Activated CD4-positive, alpha-beta memory T cell treated with anti-CD3 and anti-CD28 coated beads, Interleukin-2, amount 10 ng/mL, durations not matched to agents 7 days and 5 days (primary cell): ENCODE measurements at regions of chr20 and their contacts with region 1.

Region 1: DNA sequence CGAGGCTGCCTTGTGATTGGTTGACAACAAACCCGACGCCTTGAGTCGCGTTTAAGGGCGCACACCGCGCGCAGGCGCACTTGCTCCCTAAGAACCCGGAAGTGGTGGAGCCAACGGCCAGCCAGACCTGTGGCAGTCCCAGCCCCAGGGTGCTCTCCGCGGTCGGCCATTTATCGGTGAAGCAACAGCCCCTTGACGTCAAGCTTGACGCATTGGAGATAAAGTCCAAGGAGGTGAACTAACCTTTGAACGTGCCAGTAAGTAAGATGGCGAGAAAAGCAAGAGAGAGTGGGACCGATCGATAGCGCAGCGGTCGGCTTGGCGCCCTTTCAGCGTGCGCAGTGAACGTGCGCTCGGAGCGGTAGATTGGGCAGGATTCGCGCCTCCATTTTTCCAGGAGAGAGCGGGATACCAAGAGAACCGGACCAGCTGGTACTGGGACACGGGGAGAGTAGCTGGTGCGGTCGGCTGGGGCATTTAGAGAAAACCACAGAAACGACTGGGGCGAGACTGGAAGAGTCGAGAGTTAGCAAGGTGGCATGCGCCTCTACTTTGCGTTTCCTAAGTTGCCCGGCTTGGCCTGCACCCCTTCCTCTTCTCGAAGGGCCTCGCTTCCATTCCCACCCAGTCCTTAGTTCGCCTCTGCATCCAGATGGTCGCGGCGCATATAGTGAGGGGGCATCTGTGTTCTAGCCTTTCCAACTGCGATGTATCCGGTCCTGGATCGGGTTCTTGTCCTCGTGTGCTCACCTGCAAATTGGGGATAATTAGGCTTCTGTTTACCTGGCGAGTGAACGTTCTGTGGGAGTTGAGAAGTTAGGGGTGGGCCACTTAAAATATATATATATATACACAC is at the start of gene CSTF1:
- DNase-seq: peak; percentile 99
- H3K4me3 Mint-ChIP-seq: no peak within 1 kb of the TSS
- H3K27ac Mint-ChIP-seq: no peak within 1 kb of the TSS
- H3K4me1 Mint-ChIP-seq: peaks cover 66% of the 10 kb centered on the region
- H3K27me3 Mint-ChIP-seq: no peaks in the 10 kb centered on the region
- total RNA-seq, gene CSTF1: 61.5 to 64.9 TPM

Region 2: DNA sequence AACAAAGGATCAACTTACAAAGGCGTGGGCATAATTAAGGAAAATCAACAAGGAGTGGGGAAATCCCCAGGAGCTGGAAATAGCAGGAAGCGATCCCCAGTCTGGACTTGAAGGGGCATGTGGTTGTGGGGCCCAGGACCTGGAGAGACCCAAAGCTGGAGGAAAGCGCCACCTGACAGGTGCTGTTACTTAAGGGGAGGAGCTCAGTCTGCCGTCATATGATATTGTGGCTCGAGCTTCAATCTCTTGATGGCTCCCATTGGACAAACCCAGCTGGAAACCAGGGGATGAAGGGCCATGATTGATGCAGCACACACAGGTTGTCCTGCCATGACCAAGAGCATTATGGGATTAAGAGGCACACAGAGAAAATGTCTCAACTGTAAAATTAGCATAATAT is 85.6 kb before region 1 on chr20:
- CTCF ChIA-PET with region 1: no interaction called
- POLR2A ChIA-PET with region 1: no interaction called
- DNase-seq: no peak
- H3K4me3 Mint-ChIP-seq: no peak overlapping the region
- H3K27ac Mint-ChIP-seq: no peak overlapping the region
- H3K4me1 Mint-ChIP-seq: no peaks in the 10 kb centered on the region
- H3K27me3 Mint-ChIP-seq: no peaks in the 10 kb centered on the region

Region 3: GRCh38 chr20:56358596-56359211 is 33.8 kb before region 1 on chr20 and contains the start of gene FAM210B:
- CTCF ChIA-PET with region 1: no interaction called
- POLR2A ChIA-PET with region 1: interaction called, 19 read pairs
- DNase-seq: peak; percentile 85
- H3K4me3 Mint-ChIP-seq: peak within 1 kb of the TSS; percentile 77
- H3K27ac Mint-ChIP-seq: no peak within 1 kb of the TSS
- H3K4me1 Mint-ChIP-seq: peaks cover 13% of the 10 kb centered on the region
- H3K27me3 Mint-ChIP-seq: peaks cover 5% of the 10 kb centered on the region
- total RNA-seq, gene FAM210B: 3.7 to 4.3 TPM

Region 4: DNA sequence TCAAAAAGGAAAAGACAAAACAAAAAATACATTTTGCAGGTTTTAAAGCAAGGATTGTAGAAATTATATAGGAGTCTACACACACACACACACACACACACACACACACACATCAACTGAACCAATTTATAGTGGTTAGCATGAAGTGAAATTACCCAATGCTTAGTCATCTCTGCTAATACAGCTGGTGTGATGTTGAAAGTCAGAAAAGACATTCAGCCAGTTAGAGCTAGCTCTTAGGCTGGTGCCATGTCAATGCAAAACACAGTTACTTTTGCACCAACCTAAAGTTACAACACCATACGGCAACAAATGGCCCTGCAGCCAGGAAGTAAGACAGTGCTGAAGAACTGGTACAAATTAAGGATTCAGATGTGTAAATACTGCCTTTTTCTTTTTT is 18.6 kb before region 1 on chr20:
- CTCF ChIA-PET with region 1: interaction called, 3 read pairs
- POLR2A ChIA-PET with region 1: interaction called, 15 read pairs
- DNase-seq: no peak
- H3K4me3 Mint-ChIP-seq: no peak overlapping the region
- H3K27ac Mint-ChIP-seq: peak overlapping the region; percentile 61
- H3K4me1 Mint-ChIP-seq: peaks cover 44% of the 10 kb centered on the region
- H3K27me3 Mint-ChIP-seq: no peaks in the 10 kb centered on the region

Region 5: DNA sequence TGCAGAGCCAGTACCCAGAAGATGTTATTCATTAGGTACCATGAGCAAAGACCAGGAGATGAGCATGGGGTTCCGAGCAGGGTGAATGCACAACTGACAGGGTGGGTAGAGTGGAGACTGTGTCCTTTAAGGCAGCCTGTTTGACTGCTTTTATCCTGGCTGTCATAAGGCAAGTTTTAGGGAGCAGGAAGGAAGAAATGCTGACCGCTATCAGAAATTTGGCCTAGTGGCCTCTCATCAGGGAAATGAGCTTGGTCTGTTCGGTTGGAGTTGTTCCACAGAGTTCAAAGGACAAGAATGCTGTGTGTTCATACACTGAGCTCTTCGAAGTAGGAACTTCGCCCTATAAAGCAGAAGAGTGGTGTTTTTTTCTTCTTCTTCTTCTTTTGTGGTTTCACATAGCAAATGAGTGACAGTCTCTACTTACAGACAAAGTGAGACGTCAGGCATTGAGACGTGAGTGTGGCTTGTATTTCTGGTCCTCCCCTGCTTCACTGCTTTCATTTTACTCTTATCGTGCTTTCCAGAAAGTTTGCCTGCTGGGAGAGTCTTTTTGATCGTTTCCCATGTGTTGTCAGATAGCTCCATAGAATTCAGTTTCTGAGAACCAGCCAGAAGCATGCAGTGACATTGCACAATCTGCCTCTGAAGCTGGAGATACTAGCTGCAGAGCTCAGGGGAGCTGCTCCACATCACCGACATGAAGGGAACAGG is 19.4 kb after region 1 on chr20 and contains the start of gene CASS4:
- CTCF ChIA-PET with region 1: interaction called, 8 read pairs
- POLR2A ChIA-PET with region 1: interaction called, 58 read pairs
- DNase-seq: peak; percentile 54
- H3K4me3 Mint-ChIP-seq: peak within 1 kb of the TSS; percentile 79
- H3K27ac Mint-ChIP-seq: peak within 1 kb of the TSS; percentile 90
- H3K4me1 Mint-ChIP-seq: peaks cover 60% of the 10 kb centered on the region
- H3K27me3 Mint-ChIP-seq: no peaks in the 10 kb centered on the region
- total RNA-seq, gene CASS4: 13.2 TPM

Region 6: DNA sequence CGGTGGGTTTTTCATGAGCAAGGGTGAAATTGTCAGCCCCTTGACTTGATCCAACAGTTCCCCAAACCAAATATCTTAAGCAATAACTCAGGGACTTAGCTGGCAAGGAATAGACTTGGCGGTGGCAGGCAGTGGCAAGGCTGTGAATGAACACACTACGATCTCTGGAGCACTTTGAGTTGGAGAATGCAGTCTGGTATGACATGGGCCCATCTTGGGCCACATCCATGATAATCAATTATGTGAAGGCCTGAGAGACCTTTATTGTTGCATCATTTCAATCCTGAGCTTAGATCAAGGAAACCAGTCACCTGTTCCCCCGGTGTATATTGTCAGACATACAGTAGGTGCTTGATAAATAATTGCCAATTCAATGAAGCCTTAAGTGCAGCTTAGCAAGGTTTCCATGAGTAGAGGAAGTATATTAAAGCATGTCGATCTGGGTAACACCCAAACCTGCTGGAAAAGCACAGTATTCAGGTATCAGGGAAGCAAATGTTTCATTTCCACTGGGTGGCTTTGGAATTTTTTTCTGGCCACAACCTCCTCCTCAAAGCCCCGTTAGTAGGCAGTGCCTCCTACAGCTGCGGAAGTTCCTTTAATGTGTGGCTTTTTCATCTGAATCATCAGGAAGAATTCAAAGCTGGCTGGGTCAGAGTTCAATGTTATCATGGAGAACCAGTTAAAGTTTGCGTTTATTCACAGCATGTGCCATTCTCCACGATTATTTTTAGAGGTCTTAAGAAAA is 29.7 kb after region 1 on chr20:
- CTCF ChIA-PET with region 1: no interaction called
- POLR2A ChIA-PET with region 1: interaction called, 50 read pairs
- DNase-seq: no peak
- H3K4me3 Mint-ChIP-seq: peak overlapping the region; percentile 8
- H3K27ac Mint-ChIP-seq: peak overlapping the region; percentile 52
- H3K4me1 Mint-ChIP-seq: peaks cover 68% of the 10 kb centered on the region
- H3K27me3 Mint-ChIP-seq: no peaks in the 10 kb centered on the region

Region 7: DNA sequence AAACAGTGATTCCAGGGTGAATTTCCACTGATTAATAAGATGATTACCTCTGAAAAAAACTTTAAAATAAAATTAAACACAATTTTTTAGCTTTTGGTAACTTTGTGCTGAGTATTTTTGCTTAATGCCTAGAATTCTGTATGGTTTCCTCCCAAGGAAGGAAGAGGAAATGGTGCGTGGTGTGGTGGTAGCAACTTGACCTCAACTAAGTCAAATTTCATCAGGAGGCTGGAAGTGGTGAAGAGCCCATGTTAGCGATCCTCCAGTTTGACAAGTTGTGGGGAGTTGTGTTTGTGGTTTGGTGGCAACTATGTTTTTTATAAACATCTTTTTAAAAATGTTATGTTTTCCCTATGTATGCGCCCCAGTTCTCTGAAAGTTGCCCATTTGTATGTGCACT is 70.9 kb after region 1 on chr20:
- CTCF ChIA-PET with region 1: interaction called, 12 read pairs
- POLR2A ChIA-PET with region 1: interaction called, 41 read pairs
- DNase-seq: peak; percentile 74
- H3K4me3 Mint-ChIP-seq: peak overlapping the region; percentile 32
- H3K27ac Mint-ChIP-seq: peak overlapping the region; percentile 80
- H3K4me1 Mint-ChIP-seq: peaks cover 76% of the 10 kb centered on the region
- H3K27me3 Mint-ChIP-seq: no peaks in the 10 kb centered on the region

Region 8: DNA sequence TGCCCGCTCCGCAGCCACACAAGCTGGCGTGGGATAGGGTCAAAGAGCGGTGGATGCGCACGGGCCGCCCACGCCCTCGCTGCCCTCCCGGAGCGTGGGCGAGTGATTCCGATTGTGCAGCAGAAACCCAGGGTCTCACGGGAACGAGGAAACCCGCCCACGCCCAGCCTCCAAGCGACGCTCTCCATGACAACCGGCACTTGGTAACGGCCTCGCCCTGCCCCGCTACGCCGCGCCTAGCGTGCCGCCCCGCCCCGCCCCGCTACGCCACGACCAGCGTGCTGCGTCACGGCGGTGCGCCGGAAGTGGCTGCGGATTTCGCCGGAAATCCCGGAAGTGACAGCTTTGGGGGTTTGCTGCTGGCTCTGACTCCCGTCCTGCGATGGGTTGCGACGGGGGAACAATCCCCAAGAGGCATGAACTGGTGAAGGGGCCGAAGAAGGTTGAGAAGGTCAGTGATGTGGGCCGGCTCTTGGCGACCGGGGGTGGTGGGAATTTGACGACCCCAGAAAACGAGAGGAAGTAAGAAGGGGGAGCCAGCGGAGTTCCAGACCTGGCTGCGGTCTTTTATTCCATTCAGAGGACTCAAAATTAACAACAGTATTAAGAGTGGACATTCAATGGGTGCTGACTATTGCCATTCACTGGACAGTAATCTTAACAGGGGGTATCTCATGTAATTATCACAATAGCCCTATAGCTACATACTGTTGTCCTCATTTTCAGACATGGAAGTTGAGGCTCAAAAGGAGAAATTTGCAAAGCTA is 76.0 kb after region 1 on chr20 and contains the start of gene RTF2:
- CTCF ChIA-PET with region 1: interaction called, 12 read pairs
- POLR2A ChIA-PET with region 1: interaction called, 41 read pairs
- DNase-seq: peak; percentile 98
- H3K4me3 Mint-ChIP-seq: peak within 1 kb of the TSS; percentile 100
- H3K27ac Mint-ChIP-seq: peak within 1 kb of the TSS; percentile 98
- H3K4me1 Mint-ChIP-seq: peaks cover 65% of the 10 kb centered on the region
- H3K27me3 Mint-ChIP-seq: no peaks in the 10 kb centered on the region
- total RNA-seq, gene RTF2: 121 TPM